Right lobe of liver (tissue), 6 donors: ENCODE measurements at regions of chr1 and their contacts with region 1.

Region 1: GRCh38 chr1:119603695-119604094 is 44.4 kb downstream of the ZNF697 start:
- DNase-seq: no peak
- ATAC-seq: peak in 2 of 4 donors; percentile 49 to 52
- H3K4me3 ChIP-seq: no peak overlapping the region
- H3K27ac ChIP-seq: no peak overlapping the region
- H3K4me1 ChIP-seq: peaks cover 0 to 7% (median 0%) of the 10 kb centered on the region in 4 donors
- H3K27me3 ChIP-seq: no peaks in the 10 kb centered on the region
- CTCF ChIP-seq: no peak
- POLR2A ChIP-seq: no peak

Region 2: DNA sequence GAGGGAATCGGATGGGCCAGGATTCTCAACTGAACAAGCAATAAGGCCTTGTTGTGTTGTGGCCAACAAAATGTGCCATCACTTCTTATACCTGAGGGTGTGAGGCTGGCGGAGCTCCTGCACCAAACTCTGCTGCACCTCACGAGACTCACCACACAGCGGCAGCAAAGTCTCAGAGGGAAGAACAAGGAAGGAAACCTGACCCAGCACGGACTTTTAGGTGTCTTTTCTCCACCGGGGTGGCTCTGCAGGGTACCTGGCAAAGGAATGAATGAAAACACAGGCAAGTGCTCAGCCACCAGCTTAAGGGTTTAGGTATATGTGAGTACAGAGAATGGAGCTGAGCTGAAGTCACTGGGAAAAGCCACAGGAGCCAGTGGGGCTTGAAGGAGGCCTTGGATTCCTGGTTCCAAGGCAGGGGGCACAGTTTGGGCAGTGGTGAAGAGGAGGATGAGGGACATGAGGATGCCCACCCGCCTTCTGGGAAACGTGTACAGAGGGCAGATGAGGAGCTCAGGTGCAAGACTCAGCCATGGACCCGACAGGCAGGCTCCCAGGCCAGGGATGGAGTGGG is 127.7 kb before region 1 on chr1:
- intact Hi-C with region 1: loop called in 1 of 2 experiments (anchors 10 kb)
- DNase-seq: peak; percentile 72 to 76 (median 75)
- ATAC-seq: peak; percentile 91 to 92 (median 92)
- H3K4me3 ChIP-seq: no peak overlapping the region
- H3K27ac ChIP-seq: no peak overlapping the region
- H3K4me1 ChIP-seq: peaks cover 0 to 18% (median 4%) of the 10 kb centered on the region in 4 donors
- H3K27me3 ChIP-seq: no peaks in the 10 kb centered on the region
- CTCF ChIP-seq: peak; percentile 67 to 82 (median 78)
- POLR2A ChIP-seq: no peak